ENCODE measurements at regions of chr7 and their contacts with region 1.

Region 1: DNA sequence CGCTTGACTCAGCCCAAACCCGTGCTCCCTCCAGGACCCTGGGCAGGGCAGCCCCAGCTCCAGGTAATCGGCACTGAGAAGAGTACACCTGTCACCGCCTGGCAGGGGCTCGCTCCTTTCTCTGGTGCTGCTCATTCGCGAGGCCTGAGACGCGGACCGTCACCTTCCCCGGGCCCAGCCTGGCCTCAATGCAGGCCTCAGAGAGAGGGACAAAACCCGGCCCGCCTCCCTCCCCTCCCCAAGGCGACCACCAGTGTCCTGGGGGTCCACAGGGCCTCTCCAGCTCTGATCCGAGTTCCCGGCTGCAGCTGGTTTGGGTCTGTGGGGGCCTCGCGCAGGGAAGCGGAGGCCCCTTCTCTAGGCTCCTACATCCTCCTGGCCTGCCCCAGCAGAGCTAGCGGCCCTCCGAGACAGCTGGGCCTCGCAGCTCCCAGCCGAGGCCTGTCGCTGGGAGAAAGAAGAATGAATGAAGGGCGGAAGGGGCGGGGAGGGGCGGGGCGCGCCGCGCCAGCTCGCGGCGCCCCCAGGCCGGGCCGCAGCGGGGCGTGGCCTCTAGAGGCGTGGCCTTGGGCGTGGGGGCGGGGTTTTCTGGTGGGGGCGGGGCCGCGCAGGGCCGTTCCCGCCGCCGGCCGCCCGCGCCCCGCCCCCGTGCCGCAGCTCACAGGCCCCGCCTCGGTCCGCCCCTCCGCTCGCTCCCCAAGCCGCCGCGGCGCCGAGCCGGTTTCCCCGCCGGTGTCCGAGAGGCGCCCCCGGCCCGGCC is at the start of gene LIMK1:
- DNase-seq: peak; percentile 96
- H3K4me3 ChIP-seq: peak within 1 kb of the TSS; percentile 57 to 92 (median 68)
- H3K27ac ChIP-seq: peak within 1 kb of the TSS in 6 of 8 donors; percentile 19 to 83 (median 64)
- H3K4me1 ChIP-seq: peaks cover 8 to 29% (median 21%) of the 10 kb centered on the region in 6 donors
- H3K27me3 ChIP-seq: no peaks in the 10 kb centered on the region
- CTCF ChIP-seq: no peak
- POLR2A ChIP-seq: no peak
- total RNA-seq, gene LIMK1: 33.1 to 45.8 (median 41.0) TPM

Region 2: DNA sequence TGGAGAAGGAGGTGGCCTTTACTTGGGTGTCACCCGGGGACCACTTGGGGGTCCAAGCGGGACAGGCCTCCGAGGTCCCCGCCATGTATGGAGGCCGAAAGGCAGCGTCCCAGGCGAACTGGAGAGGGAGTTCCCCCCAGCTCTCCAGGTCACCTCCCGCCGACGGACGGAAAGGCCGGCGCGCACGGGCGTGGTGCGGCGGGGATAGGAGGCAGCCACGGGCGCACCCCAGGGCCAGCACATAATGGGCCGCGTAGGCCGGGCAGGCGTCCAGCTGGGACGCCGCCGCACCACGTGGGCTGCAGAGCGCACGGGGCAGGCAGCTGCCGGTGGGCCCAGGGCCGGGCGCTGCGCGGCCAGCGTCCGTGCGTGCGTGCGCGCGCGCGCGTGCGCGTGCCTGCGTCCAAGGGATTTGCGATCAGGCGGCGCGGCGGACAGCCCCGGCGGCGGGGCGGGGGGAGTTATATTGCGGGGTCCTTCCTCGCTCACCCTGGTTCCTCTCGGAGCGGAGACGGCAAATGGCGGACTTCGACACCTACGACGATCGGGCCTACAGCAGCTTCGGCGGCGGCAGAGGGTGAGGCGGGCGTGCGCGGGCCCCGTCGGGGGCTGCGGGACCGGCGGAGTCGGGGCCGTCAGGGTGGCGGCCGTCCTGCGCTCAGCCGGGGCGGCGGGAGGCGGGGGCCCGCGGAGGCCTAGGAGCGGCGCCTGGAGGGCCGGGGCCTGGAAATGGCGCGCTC is 90.7 kb after region 1 on chr7 and contains the start of gene EIF4H:
- intact Hi-C with region 1: loop called (anchors 5 kb)
- DNase-seq: peak; percentile 99
- H3K4me3 ChIP-seq: peak within 1 kb of the TSS; percentile 81 to 98 (median 90)
- H3K27ac ChIP-seq: peak within 1 kb of the TSS; percentile 86 to 97 (median 94)
- H3K4me1 ChIP-seq: peaks cover 44 to 62% (median 54%) of the 10 kb centered on the region in 6 donors
- H3K27me3 ChIP-seq: no peaks in the 10 kb centered on the region
- CTCF ChIP-seq: no peak
- POLR2A ChIP-seq: peak in 1 of 3 donors; percentile 43
- total RNA-seq, gene EIF4H: 179 to 224 (median 197) TPM

Measured in spleen (tissue), 13 donors.